Activated CD4-positive, alpha-beta T cell treated with anti-CD3 and anti-CD28 coated beads, Interleukin-2, amount 10 ng/mL, durations not matched to agents 24 days and 14 days (primary cell): ENCODE measurements at regions of chrX and their contacts with region 1.

Region 1: DNA sequence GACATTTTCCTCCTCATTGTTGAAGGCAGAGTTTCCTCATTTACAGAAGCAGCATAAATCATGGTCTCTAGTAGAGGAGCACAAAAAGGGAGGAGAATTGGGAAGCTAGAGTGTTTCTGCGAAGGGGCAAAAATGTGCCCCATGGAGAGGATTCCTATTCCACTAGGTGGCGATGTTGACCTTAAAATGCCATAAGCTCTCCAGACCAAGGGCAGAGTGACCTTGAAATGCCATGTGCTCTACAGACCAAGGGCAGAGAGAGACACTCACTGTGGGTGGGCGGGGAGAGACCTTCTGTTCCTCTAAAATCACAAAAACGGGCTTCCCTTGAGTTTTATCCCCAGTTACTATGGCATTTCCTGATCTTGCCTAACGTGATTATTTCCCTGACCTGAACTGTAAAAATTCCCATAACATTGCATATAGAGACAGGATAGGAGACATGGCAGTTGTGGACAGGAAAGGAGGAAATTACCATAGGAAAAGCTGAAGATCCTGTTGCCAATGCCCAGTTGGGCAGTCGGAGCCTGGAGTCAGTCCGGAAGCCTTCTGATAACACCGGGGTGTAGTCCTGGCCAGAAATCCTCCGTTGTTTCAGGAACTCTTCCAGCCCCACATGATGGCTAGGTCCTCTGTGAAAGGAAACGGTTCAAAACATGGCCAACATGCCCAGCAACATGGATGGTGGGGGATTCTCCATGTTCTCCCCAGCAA is 567.7 kb downstream of the MAGEB5 start:
- DNase-seq: peak; percentile 57
- H3K4me3 Mint-ChIP-seq: no peak overlapping the region
- H3K27ac Mint-ChIP-seq: no peak overlapping the region
- H3K4me1 Mint-ChIP-seq: no peaks in the 10 kb centered on the region
- H3K27me3 Mint-ChIP-seq: no peaks in the 10 kb centered on the region

Region 2: DNA sequence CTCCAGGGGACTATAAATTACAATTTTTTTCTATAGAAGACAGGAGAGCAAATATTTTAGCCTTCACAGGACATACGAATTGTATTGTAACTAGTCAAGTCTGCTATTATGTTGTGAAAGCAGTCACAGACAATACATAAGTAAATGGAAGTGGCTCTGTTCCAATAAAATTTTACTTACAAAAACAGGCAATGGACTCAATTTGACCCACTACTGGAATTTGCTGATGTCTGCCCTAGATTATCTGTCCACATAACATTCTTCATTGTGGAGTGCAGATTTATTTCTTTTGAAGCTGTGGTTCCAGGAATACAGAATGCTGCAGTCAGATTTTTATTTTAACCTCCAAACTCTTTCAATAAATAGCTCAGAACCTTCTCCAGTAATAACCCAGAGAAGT is 349.2 kb after region 1 on chrX:
- intact Hi-C with region 1: no loop called
- DNase-seq: no peak
- H3K4me3 Mint-ChIP-seq: no peak overlapping the region
- H3K27ac Mint-ChIP-seq: no peak overlapping the region
- H3K4me1 Mint-ChIP-seq: no peaks in the 10 kb centered on the region
- H3K27me3 Mint-ChIP-seq: no peaks in the 10 kb centered on the region

Region 3: GRCh38 chrX:27336466-27337091 is 552.9 kb after region 1 on chrX:
- intact Hi-C with region 1: loop called (anchors 5 kb)
- DNase-seq: peak; percentile 66
- H3K4me3 Mint-ChIP-seq: no peak overlapping the region
- H3K27ac Mint-ChIP-seq: no peak overlapping the region
- H3K4me1 Mint-ChIP-seq: no peaks in the 10 kb centered on the region
- H3K27me3 Mint-ChIP-seq: no peaks in the 10 kb centered on the region